CD4-positive, alpha-beta memory T cell (primary cell): ENCODE measurements at regions of chr11 and their contacts with region 1.

Region 1: DNA sequence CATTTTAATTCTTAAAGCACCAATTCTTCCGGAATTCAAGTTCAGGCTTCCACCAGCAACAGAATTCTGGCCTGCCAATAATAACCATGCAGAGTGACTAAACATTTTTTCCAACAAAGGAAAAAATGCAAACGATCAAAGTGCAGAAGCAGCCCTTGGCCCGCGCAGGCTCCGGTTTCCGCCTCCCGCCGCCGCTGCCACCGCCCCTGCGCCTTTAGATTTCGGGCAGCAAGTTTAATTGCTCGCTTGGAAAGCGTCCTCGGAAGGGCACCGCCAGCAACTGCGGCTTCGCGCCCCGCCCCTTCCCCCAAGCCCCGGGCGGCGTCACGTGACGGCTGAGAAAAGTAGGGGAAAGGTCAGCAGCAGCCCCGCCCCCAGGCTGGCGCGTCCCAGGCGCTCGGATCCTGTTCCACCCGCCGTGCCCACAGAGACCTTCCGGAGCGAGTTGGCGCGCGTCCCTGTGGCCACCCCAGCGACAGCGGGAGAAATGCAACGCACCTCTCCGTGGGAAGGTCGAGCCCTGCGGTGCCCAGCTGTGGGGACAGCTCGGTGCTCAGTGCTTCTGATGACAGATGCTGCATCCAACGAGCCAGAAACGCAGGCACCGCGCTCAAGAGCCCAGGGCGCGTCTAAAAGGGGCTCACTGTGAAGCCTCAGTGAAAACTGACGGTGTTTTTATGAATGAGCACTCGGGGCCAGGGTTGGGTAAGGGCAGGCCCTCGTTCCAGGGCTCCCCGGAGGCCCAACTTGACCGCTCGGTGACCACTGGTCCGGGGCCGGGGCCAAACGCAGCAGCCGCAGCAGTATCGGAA is 2.5 kb downstream of the CPT1A start:
- DNase-seq: peak; percentile 93 to 96 (median 95)
- H3K4me3 ChIP-seq: peak overlapping the region; percentile 58 to 67
- H3K4me3 Mint-ChIP-seq: peak overlapping the region; percentile 83 to 93 (median 88)
- H3K27ac ChIP-seq: peak overlapping the region; percentile 67
- H3K27ac Mint-ChIP-seq: peak overlapping the region; percentile 90 to 98 (median 95)
- H3K4me1 ChIP-seq: peaks cover 81% of the 10 kb centered on the region
- H3K4me1 Mint-ChIP-seq: peaks cover 27 to 75% (median 56%) of the 10 kb centered on the region in 4 donors
- H3K27me3 ChIP-seq: no peaks in the 10 kb centered on the region
- H3K27me3 Mint-ChIP-seq: no peaks in the 10 kb centered on the region

Region 2: DNA sequence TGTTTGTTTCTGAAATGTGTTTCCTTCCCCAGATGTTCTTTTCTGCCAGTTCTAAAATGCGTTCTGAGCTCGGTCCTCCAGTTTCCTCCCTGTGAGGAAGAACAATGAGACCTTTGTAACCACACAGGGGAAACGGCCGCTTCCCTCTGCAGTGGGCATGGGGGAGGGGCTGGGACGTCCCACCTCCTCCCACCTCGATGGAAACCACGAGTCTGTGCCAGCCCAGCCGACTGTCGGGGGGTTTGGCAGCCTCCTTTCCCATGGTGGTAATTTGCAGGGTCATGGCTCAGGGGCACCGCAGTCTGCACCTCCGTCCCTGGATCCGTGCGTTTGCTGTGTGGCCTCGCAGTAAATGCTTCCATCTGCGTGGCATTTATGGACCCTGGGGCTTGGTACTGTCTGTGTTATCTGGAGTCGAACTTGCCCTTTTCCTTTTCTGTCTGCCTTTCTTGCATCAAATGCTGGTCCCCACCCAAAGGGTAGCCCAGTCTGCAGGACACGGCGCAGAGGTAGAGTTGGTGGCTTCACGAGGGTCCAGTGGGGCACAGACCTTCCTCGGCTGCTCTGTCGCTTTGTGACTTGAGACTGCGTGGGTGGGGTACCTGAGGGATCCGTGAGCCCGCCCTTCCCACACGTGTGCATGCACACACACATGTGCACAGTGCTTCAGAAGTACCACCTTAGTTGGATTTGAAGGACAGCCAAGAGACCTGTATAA is 510.7 kb before region 1 on chr11:
- CTCF ChIA-PET with region 1: no interaction called
- POLR2A ChIA-PET with region 1: no interaction called
- intact Hi-C with region 1: no loop called
- DNase-seq: no peak
- H3K4me3 ChIP-seq: no peak overlapping the region
- H3K4me3 Mint-ChIP-seq: peak overlapping the region in 3 of 8 donors; percentile 8 to 27 (median 9)
- H3K27ac ChIP-seq: no peak overlapping the region
- H3K27ac Mint-ChIP-seq: peak overlapping the region in 1 of 7 donors; percentile 43
- H3K4me1 ChIP-seq: peaks cover 42% of the 10 kb centered on the region
- H3K4me1 Mint-ChIP-seq: peaks cover 20 to 60% (median 46%) of the 10 kb centered on the region in 4 donors
- H3K27me3 ChIP-seq: no peaks in the 10 kb centered on the region
- H3K27me3 Mint-ChIP-seq: no peaks in the 10 kb centered on the region

Region 3: GRCh38 chr11:68584097-68584496 is 255.2 kb before region 1 on chr11:
- CTCF ChIA-PET with region 1: interaction called, 18 read pairs
- POLR2A ChIA-PET with region 1: no interaction called
- intact Hi-C with region 1: loop called (anchors 1 kb)
- DNase-seq: peak; percentile 35 to 46 (median 40)
- H3K4me3 ChIP-seq: no peak overlapping the region
- H3K4me3 Mint-ChIP-seq: no peak overlapping the region
- H3K27ac ChIP-seq: no peak overlapping the region
- H3K27ac Mint-ChIP-seq: peak overlapping the region in 2 of 7 donors; percentile 31 to 36
- H3K4me1 ChIP-seq: no peaks in the 10 kb centered on the region
- H3K4me1 Mint-ChIP-seq: peaks cover 6 to 13% (median 8%) of the 10 kb centered on the region in 4 donors
- H3K27me3 ChIP-seq: no peaks in the 10 kb centered on the region
- H3K27me3 Mint-ChIP-seq: no peaks in the 10 kb centered on the region

Region 4: DNA sequence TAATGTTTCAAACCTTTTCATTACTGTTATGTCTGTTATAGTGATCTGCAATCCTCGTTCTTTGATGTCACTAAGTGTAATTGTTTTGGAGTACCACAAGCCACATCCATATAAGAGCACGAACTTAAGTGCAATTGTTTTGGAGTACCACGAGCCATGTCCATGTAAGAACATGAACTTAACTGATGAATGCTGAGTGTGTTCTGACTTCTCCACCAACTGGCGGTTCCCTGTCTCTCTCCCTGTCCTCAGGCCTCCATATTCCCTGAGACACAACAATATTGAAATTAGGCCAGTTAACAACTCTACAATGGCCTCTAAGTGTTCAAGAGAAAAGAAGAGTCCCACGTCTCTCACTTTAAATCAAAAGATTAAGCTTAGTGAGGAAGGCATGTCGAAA is 111.5 kb before region 1 on chr11:
- CTCF ChIA-PET with region 1: no interaction called
- POLR2A ChIA-PET with region 1: no interaction called
- intact Hi-C with region 1: no loop called
- DNase-seq: no peak
- H3K4me3 ChIP-seq: no peak overlapping the region
- H3K4me3 Mint-ChIP-seq: no peak overlapping the region
- H3K27ac ChIP-seq: no peak overlapping the region
- H3K27ac Mint-ChIP-seq: no peak overlapping the region
- H3K4me1 ChIP-seq: no peaks in the 10 kb centered on the region
- H3K4me1 Mint-ChIP-seq: no peaks in the 10 kb centered on the region
- H3K27me3 ChIP-seq: no peaks in the 10 kb centered on the region
- H3K27me3 Mint-ChIP-seq: no peaks in the 10 kb centered on the region

Region 5: GRCh38 chr11:68798221-68798813 is 40.9 kb before region 1 on chr11:
- CTCF ChIA-PET with region 1: interaction called, 54 read pairs
- POLR2A ChIA-PET with region 1: interaction called, 6 read pairs
- intact Hi-C with region 1: loop called (anchors 5 kb)
- DNase-seq: peak in 3 of 5 donors; percentile 17 to 37 (median 26)
- H3K4me3 ChIP-seq: no peak overlapping the region
- H3K4me3 Mint-ChIP-seq: peak overlapping the region in 1 of 8 donors; percentile 11
- H3K27ac ChIP-seq: no peak overlapping the region
- H3K27ac Mint-ChIP-seq: no peak overlapping the region
- H3K4me1 ChIP-seq: no peaks in the 10 kb centered on the region
- H3K4me1 Mint-ChIP-seq: peaks cover 0 to 1% (median 0%) of the 10 kb centered on the region in 4 donors
- H3K27me3 ChIP-seq: no peaks in the 10 kb centered on the region
- H3K27me3 Mint-ChIP-seq: no peaks in the 10 kb centered on the region

Region 6: GRCh38 chr11:68825571-68825970 is 13.7 kb before region 1 on chr11:
- CTCF ChIA-PET with region 1: interaction called, 85 read pairs
- POLR2A ChIA-PET with region 1: interaction called, 29 read pairs
- intact Hi-C with region 1: loop called (anchors 1 kb)
- DNase-seq: peak; percentile 30 to 59 (median 40)
- H3K4me3 ChIP-seq: no peak overlapping the region
- H3K4me3 Mint-ChIP-seq: peak overlapping the region in 2 of 8 donors; percentile 20 to 36
- H3K27ac ChIP-seq: no peak overlapping the region
- H3K27ac Mint-ChIP-seq: peak overlapping the region in 1 of 7 donors; percentile 17
- H3K4me1 ChIP-seq: peaks cover 16% of the 10 kb centered on the region
- H3K4me1 Mint-ChIP-seq: peaks cover 21 to 47% (median 32%) of the 10 kb centered on the region in 4 donors
- H3K27me3 ChIP-seq: no peaks in the 10 kb centered on the region
- H3K27me3 Mint-ChIP-seq: no peaks in the 10 kb centered on the region

Region 7: DNA sequence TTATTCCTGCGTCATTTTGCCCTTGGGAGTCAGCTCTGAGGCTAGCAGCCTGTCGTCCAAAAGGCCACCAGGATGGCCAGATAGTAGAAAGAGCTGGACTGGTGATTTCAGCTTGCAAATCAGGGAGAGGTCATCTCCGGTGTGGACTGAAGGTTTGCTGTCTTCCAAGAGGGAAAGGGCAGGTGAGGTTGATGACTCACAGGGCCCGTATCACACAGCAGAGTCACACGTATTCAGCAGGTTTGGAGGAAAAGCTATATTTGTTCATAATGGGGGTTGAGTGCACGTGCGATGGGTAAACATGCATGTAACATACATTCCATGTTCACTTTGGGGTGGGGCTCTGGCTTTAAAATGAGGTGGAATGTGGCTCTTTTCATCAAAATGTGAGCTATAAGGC is 38.8 kb after region 1 on chr11:
- CTCF ChIA-PET with region 1: no interaction called
- POLR2A ChIA-PET with region 1: no interaction called
- intact Hi-C with region 1: no loop called
- DNase-seq: no peak
- H3K4me3 ChIP-seq: no peak overlapping the region
- H3K4me3 Mint-ChIP-seq: no peak overlapping the region
- H3K27ac ChIP-seq: no peak overlapping the region
- H3K27ac Mint-ChIP-seq: no peak overlapping the region
- H3K4me1 ChIP-seq: no peaks in the 10 kb centered on the region
- H3K4me1 Mint-ChIP-seq: no peaks in the 10 kb centered on the region
- H3K27me3 ChIP-seq: no peaks in the 10 kb centered on the region
- H3K27me3 Mint-ChIP-seq: no peaks in the 10 kb centered on the region

Region 8: DNA sequence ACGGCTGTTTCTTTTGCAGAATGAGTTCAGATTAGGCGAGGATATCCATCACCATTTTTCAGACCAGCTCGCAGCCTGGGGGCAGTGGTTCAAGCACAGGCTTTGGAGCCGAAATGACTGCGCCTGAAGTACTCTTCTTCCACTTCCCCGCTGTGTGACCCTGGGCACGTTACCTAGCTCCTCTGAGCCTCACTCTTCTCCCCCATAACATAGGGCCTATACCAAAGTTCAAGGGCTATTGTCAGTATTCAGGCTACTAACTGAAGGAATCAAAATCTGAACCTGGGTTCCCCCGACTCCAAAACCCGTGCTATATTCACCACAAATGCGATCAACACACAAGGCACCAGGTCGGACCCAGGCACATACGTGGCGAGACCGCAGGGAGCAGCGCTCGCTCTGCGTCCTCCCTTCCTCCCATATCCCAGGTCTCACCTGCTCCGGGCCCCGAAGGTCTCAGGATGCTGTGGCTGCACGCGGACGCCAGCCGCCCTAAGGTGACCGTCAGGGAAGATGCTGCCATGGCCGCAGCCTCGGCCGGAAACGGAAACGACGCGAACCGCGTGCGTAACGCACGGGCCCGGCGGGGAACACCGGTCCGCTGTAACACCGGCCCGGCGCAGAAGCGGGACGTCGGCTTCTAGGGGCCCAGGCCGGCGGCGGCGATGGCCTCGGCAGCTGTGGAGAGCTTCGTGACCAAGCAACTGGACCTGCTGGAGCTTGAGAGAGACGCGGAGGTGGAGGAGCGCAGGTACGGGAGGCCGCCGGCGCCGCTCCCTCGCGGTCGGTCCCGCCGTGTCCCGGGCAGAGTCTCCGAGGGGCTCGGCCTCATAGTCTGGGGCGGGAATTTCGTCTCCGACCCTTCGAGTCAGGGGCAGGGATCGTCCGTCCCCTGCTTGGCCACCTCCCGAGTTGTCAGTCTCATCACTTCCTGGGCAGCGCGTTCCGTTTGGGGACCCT is 64.3 kb after region 1 on chr11 and contains the starts of genes IGHMBP2 and MRPL21:
- CTCF ChIA-PET with region 1: interaction called, 4 read pairs
- POLR2A ChIA-PET with region 1: interaction called, 3 read pairs
- intact Hi-C with region 1: loop called (anchors 1 kb)
- DNase-seq: peak; percentile 79 to 85 (median 80)
- H3K4me3 ChIP-seq: peak within 1 kb of the TSS; percentile 48 to 90
- H3K4me3 Mint-ChIP-seq: peak within 1 kb of the TSS; percentile 91 to 99 (median 97)
- H3K27ac ChIP-seq: peak within 1 kb of the TSS; percentile 86
- H3K27ac Mint-ChIP-seq: peak within 1 kb of the TSS; percentile 94 to 97 (median 96)
- H3K4me1 ChIP-seq: peaks cover 31% of the 10 kb centered on the region
- H3K4me1 Mint-ChIP-seq: peaks cover 34 to 55% (median 44%) of the 10 kb centered on the region in 4 donors
- H3K27me3 ChIP-seq: no peaks in the 10 kb centered on the region
- H3K27me3 Mint-ChIP-seq: no peaks in the 10 kb centered on the region
- total RNA-seq, gene IGHMBP2: 36.8 to 37.6 TPM
- total RNA-seq, gene MRPL21: 36.2 to 37.3 TPM

Region 9: DNA sequence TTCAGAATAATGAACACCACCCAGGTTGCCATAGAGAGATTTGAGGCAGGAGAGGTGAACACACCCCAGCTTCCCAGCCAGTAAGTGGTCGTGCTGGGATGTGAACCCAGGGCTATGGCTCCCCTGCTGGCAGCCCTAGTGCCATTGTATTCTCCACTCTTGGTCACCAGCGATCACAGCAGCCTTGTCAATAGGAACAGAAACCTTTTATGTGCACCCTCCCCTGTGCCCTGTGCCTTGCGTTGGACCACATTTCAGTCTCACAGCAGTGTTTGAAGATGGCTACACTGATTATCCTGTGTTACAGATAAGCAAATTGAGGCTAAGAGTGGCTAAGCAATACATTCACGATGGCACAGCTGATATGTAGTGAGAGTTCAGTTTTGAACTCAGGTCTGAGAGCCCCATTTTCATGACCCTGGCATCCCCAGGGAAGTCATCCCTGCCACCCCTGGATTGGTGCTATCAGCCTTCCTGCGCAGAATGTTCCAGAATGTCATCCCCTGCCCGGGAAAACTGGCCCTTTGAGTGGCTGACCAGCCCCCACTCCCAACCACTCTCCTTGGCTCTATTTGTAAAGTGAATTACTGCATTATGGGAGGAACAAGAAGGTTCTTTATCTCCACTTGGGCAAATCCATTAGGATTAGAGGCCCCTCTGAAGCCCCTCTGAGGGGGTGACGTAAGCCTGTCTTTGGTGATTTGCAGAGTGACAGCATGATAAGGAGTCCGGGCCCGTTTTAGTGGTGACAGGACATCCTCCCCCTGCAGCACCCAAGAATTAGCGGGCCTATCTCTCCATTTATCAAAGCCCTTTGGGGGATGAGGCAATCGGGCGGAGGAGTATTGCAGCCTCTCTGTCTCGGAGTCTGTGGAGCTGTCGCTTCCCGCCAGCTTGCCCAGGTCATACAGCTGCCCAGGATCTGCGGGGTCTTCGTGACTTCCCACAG is 347.3 kb after region 1 on chr11:
- CTCF ChIA-PET with region 1: no interaction called
- POLR2A ChIA-PET with region 1: no interaction called
- intact Hi-C with region 1: no loop called
- DNase-seq: no peak
- H3K4me3 ChIP-seq: no peak overlapping the region
- H3K4me3 Mint-ChIP-seq: no peak overlapping the region
- H3K27ac ChIP-seq: no peak overlapping the region
- H3K27ac Mint-ChIP-seq: no peak overlapping the region
- H3K4me1 ChIP-seq: no peaks in the 10 kb centered on the region
- H3K4me1 Mint-ChIP-seq: peaks cover 0 to 2% (median 0%) of the 10 kb centered on the region in 4 donors
- H3K27me3 ChIP-seq: peaks cover 3% of the 10 kb centered on the region
- H3K27me3 Mint-ChIP-seq: peaks cover 0 to 6% of the 10 kb centered on the region in 2 donors